ENCODE measurements at regions of chr10 and their contacts with region 1.

Region 1: DNA sequence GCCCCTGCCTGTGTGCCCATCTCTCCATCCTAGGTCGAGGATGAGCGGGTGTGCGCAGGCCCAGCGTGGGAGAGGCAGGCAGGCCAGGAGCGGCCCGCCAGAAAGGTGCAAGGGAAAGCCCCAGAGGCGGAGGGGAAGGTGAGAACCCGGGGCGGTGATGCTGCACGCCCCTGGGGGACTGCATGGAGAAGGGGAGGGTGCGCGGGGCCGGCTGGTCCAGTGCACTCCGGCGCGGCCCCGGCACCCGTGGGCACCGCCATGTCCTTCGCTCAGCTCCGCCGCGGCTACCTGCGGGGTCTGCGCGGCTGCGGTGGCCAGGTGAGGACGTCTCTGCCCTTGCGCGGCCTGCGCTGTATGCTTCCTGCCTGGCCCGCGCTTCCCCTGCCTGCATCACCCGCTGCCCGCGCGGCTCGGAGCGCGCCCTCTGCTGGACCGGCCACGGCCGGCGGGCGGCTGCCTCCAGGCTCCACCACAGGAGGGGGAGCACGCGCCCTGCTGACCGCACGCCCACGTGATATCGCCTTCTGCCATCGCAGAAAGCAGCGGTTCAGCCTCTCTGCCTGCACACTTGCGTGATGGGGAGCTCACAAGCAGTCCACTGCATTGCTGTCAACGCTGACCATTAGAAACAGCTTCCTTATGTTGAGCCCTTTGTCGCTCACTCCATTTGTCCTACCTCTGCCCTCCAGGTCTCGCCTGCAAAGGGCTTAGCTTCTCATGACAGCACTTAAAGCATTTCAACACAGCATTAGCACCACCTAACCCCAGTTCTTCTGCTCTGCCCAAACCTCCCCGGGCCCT is 73.9 kb downstream of the CXCL12 start:
- DNase-seq: peak; percentile 91
- ATAC-seq: peak; percentile 98

Region 2: GRCh38 chr10:43671656-43672531 is 639.1 kb before region 1 on chr10:
- intact Hi-C with region 1: loop called (anchors 5 kb)
- DNase-seq: peak; percentile 9
- ATAC-seq: peak; percentile 46

Region 3: DNA sequence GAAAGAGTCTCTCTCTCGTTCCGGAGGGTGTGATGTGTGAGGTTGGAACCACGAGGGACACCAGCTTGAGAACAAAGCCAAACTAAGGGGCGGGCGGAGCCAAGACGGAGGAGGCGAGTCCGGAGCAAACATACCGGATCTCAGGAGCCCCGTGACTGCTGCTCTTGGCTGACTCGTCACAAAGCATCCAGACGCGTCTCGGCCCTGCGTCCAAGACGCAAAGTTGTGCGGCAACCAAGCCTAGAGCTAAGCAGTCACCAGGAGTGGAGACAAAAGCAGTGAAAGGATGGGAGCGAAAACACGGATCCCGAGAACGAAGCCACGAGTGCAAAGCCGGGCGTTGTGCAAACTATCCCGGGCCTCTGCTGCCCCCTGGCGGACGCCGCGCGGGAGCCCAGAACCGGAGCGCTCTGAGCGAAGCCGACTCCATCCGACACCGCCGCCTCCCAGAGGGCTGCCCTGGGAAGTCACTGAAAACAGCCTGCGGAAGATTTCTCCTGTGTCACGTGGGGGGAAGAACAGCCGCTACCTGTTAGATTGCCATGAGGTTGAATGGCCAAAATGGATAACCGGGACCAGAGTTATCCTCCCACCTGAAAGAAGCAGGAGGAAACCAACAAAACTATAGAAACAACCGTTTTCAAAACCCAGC is 553.8 kb after region 1 on chr10:
- intact Hi-C with region 1: loop called (anchors 10 kb)
- DNase-seq: peak; percentile 94
- ATAC-seq: peak; percentile 96

Measured in Right ventricle myocardium inferior (tissue), 1 donor.